Psoas muscle (tissue), 8 donors: ENCODE measurements at regions of chr18 and their contacts with region 1.

Region 1: DNA sequence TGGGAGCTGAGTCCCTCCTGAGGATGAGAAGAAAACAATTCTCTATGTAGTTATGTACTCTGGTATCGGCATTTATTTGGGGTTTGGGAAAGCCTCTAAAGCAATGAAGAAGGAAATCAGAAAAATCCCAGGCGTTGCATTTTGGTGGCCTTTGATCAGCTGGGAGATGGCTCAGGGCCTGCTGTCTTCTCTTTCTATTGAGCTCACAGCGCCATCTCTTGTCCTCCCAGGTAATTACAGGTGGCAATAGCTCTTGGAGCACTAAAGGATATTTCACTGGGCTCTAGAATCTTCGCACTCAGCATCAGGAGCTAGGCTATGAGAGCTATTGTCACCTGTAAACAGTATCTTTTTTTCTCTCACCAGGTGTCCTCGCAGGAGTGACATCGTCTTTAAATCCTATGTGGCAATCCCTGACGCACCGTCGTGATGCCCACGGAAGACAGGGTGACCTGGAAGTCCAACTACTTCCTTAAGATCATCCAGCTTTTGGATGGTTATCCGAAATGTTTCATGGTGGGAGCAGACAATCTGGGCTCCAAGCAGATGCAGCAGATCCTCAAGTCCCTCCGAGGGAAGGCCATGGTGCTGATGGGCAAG is 76.1 kb upstream of the PMAIP1 start:
- DNase-seq: peak; percentile 38 to 60
- ATAC-seq: peak in 1 of 4 donors; percentile 73
- H3K4me3 ChIP-seq: no peak overlapping the region
- H3K27ac ChIP-seq: no peak overlapping the region
- H3K4me1 ChIP-seq: no peaks in the 10 kb centered on the region
- H3K27me3 ChIP-seq: no peaks in the 10 kb centered on the region
- CTCF ChIP-seq: peak; percentile 61

Region 2: DNA sequence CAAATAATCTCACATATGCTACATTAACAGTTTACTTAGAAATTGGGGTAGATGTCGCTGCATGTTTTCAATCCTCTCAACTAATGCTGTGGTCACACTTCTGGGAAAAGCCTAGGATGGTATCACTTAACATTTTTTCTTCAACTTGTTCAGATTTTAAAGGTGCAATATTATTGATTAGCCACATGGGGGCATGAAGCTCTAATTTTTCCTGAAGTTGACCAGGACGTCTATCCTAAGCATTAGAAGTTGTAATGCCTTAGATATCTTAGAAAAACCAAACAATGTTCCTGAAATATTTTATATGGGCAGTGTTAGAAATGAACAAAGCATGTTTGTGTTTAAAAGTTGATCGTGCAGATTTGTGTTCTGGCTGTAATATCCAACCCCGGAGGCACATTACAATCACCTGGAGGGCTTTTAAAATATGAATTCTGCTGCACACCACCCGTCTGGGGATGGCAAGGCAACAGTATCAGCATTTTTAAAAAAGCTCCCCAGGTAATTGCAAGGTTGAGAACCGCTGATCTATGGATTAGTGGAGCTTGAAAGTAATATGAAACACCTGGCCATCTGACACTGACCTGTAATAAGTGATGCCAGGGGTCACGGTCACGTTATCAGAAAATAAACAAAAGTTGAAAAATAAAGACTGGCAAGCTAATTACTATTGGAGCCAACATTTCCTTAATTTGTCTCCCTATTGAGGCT is 364.2 kb before region 1 on chr18:
- intact Hi-C with region 1: loop called (anchors 2 to 5 kb)
- DNase-seq: no peak
- ATAC-seq: peak in 1 of 4 donors; percentile 43
- H3K4me3 ChIP-seq: no peak overlapping the region
- H3K27ac ChIP-seq: no peak overlapping the region
- H3K4me1 ChIP-seq: no peaks in the 10 kb centered on the region
- H3K27me3 ChIP-seq: no peaks in the 10 kb centered on the region
- CTCF ChIP-seq: peak; percentile 64

Region 3: GRCh38 chr18:59631583-59632181 is 192.0 kb before region 1 on chr18:
- intact Hi-C with region 1: loop called in 1 of 2 experiments (anchors 10 kb)
- DNase-seq: no peak
- ATAC-seq: no peak
- H3K4me3 ChIP-seq: no peak overlapping the region
- H3K27ac ChIP-seq: no peak overlapping the region
- H3K4me1 ChIP-seq: no peaks in the 10 kb centered on the region
- H3K27me3 ChIP-seq: peaks cover 0 to 3% (median 0%) of the 10 kb centered on the region in 3 donors
- CTCF ChIP-seq: peak; percentile 19